Common myeloid progenitor, CD34-positive (primary cell): ENCODE measurements at regions of chr17 and their contacts with region 1.

Region 1: GRCh38 chr17:31433091-31433790 is 41.8 kb downstream of the RAB11FIP4 start:
- DNase-seq: peak; percentile 93 to 99 (median 99)
- H3K4me3 ChIP-seq: peak overlapping the region in 4 of 7 experiments; percentile 31 to 63 (median 43)
- H3K27ac ChIP-seq: no peak overlapping the region
- H3K4me1 ChIP-seq: peaks cover 0 to 30% (median 24%) of the 10 kb centered on the region in 4 experiments
- H3K27me3 ChIP-seq: peaks cover 0 to 2% (median 0%) of the 10 kb centered on the region in 5 experiments

Region 2: DNA sequence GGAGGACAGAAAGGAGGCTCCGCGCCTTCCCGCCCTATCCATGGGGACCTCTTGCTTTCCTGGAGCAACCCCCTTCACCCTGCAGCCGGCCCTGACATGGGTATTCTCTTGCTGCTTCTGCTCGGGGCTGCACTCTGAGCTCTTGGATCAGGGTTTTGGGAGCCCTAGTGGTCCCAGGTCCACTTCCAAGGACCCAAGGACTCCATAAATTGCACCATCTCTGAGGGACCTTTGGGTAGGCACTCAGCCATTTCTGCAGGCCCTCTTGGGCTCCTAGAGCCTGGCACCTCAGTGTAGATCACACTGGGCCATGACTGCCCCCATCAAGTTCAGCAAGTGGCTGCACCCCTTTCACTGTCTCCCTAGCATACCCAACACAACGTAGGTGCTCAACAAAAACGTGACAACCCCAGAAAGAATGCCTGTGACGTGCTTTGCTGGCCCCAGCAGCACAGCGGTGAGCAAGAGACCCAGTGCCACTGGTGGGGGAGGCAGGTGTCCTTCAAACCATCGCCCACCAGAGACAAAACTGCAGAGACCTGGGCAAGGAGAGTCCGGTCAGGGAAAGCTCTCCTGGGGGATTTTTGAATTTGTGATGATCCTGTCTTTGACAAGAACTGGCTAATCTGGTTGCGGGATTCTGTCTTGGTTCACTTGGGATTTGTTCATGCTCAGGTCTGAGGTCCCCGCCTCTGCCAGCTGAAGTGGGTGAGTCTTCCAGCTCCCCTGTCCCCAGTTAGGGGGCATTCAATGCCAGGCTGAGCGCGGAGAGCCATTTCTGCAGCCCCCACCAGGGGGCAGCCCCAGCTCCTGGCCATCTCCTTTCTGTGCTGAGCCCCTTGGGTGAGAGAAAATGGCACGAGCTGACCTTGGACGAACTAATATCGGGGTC is 44.2 kb before region 1 on chr17:
- CTCF ChIA-PET with region 1: interaction called, 19 read pairs
- POLR2A ChIA-PET with region 1: no interaction called
- DNase-seq: peak; percentile 52 to 61 (median 57)
- H3K4me3 ChIP-seq: no peak overlapping the region
- H3K27ac ChIP-seq: no peak overlapping the region
- H3K4me1 ChIP-seq: peaks cover 0 to 15% (median 12%) of the 10 kb centered on the region in 4 experiments
- H3K27me3 ChIP-seq: peaks cover 3 to 44% (median 38%) of the 10 kb centered on the region in 5 experiments

Region 3: GRCh38 chr17:31508288-31509094 is 75.2 kb after region 1 on chr17:
- CTCF ChIA-PET with region 1: interaction called, 36 read pairs
- POLR2A ChIA-PET with region 1: no interaction called
- DNase-seq: peak; percentile 72 to 90 (median 84)
- H3K4me3 ChIP-seq: peak overlapping the region; percentile 3 to 78 (median 44)
- H3K27ac ChIP-seq: peak overlapping the region in 1 of 2 experiments; percentile 51
- H3K4me1 ChIP-seq: peaks cover 0 to 41% (median 36%) of the 10 kb centered on the region in 4 experiments
- H3K27me3 ChIP-seq: no peaks in the 10 kb centered on the region

Region 4: GRCh38 chr17:31524926-31525800 is 91.9 kb after region 1 on chr17:
- CTCF ChIA-PET with region 1: interaction called, 167 read pairs
- POLR2A ChIA-PET with region 1: no interaction called
- DNase-seq: peak; percentile 68 to 80 (median 75)
- H3K4me3 ChIP-seq: no peak overlapping the region
- H3K27ac ChIP-seq: no peak overlapping the region
- H3K4me1 ChIP-seq: peaks cover 0 to 4% (median 0%) of the 10 kb centered on the region in 4 experiments
- H3K27me3 ChIP-seq: no peaks in the 10 kb centered on the region

Region 5: DNA sequence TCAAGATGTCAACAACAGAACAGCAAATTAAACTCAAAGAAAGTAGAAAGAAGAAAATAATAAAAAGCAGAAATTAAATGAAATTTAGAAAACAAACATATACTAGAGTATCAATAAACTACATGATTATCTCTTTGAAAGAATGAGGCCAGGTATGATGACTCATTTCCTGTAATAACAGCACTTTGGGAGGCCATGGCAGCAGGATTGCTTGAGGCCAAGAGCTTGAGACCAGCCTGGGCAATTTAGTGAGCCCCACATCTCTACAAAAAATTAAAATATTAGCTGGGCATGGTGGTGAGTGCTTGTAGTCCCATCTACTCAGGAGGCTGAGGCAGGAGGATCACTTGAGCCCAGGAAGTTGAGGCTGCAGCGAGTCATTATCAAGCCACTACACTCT is 190.7 kb after region 1 on chr17:
- CTCF ChIA-PET with region 1: no interaction called
- POLR2A ChIA-PET with region 1: no interaction called
- DNase-seq: no peak
- H3K4me3 ChIP-seq: no peak overlapping the region
- H3K27ac ChIP-seq: no peak overlapping the region
- H3K4me1 ChIP-seq: no peaks in the 10 kb centered on the region
- H3K27me3 ChIP-seq: no peaks in the 10 kb centered on the region

Region 6: DNA sequence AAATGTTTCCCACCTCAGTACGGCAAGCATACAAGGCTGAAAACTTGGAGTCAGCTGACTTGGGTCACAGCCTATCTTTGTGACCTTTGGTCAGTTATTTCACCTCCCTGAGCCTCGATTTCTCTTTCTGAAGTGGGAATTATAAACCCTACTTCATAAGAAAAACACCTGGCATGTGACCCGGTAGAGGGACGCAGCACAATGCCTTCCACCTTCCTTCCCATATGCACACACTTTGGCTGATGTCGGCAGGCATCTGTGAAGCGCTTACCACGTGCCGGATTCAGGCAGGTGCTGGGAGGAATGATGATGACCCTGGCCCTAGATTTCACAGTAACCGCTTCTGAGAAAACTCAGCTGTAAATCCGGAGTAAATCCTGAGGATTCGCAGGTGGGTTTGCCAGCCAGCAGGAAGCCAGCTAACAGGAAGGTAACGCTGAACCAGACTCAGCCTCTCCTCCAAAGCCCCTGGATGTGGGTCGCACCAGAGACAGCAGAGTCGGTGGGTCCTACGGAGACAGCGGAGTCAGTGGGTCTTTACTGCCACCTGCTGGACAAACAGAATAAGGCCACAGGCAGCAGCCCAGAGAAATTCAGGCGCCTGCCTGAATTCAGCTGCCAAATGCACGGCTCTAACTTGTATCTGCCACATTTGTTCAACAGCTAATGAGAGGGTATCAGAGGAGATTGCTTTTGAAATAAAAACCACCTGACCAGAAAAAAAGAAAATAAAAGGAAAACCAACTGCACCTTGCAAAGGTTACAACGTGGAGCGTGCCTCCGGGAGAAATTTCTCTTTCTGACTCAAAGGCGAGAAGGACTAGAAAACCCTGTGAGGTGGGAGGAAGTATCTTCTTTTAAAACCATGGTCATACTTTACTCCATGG is 409.2 kb after region 1 on chr17:
- CTCF ChIA-PET with region 1: interaction called, 19 read pairs
- POLR2A ChIA-PET with region 1: no interaction called
- DNase-seq: peak; percentile 68 to 87 (median 78)
- H3K4me3 ChIP-seq: peak overlapping the region in 2 of 7 experiments; percentile 20 to 50
- H3K27ac ChIP-seq: no peak overlapping the region
- H3K4me1 ChIP-seq: peaks cover 0 to 11% (median 4%) of the 10 kb centered on the region in 4 experiments
- H3K27me3 ChIP-seq: no peaks in the 10 kb centered on the region